AG04450 (cell line): ENCODE measurements at regions of chr12 and their contacts with region 1.

Region 1: DNA sequence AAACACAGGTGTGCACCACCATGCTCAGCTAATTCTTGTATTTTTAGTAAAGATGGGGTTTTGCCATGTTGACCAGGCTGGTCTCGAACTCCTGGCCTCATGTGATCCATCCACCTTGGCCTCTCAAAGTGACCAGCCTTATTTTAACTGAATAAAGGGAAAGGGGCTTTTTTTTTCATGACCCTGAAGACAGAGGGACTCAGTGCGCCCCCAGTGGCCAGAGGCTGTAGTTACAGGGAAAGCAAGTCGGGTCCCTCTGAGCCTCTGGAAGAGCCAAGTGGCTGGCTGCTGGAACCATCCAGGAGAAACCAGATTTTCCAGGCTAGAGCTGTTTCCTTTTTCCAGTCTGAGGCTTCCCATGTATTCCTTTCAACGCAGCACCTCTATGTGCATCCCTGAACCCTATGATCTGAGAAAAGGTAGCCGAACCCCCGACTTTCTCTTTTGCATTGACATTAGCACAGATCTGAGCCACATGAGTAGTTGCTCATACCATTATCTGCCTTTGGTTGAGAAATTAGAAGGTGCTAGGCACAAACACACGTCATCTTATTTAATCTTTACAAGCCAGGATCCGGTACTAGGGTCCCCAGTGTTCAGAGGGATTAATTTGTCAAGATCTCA is 342.7 kb downstream of the CACNA1C start:
- DNase-seq: no peak
- H3K4me3 ChIP-seq: no peak overlapping the region
- H3K27ac ChIP-seq: no peak overlapping the region
- H3K27me3 ChIP-seq: no peaks in the 10 kb centered on the region
- CTCF ChIP-seq: peak; percentile 87

Region 2: DNA sequence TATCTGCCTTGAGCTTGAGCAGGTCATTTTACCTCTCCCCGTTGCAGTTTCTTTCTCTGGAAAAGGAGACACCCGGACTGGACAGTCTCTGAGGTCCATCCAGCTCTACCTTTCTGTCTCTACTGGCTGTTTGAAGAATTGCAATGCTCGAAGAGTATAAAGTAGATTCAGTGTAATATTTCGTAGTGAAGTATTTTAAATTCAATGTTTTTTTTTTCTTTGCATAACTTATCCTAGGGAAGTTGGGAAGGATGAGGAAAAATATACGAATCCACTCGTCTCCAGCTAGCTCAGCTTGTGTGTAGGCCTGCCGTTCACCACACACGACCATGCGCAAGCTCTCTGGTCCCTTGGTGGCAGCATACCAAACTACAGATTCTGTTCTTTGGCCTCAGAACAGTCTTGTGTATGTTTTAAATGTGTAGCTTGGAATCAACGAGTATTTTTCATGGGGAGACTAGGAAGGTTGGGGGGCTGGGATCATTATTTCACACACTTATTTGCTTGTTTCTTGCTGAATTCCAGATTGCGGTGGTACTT is 34.8 kb before region 1 on chr12:
- CTCF ChIA-PET with region 1: interaction called, 11 read pairs
- POLR2A ChIA-PET with region 1: no interaction called
- DNase-seq: no peak
- H3K4me3 ChIP-seq: no peak overlapping the region
- H3K27ac ChIP-seq: no peak overlapping the region
- H3K27me3 ChIP-seq: no peaks in the 10 kb centered on the region
- CTCF ChIP-seq: peak; percentile 44

Region 3: GRCh38 chr12:2376908-2377657 is 18.4 kb before region 1 on chr12:
- CTCF ChIA-PET with region 1: interaction called, 10 read pairs
- POLR2A ChIA-PET with region 1: no interaction called
- DNase-seq: no peak
- H3K4me3 ChIP-seq: no peak overlapping the region
- H3K27ac ChIP-seq: no peak overlapping the region
- H3K27me3 ChIP-seq: peaks cover 2% of the 10 kb centered on the region
- CTCF ChIP-seq: no peak